ENCODE measurements at regions of chr17 and their contacts with region 1.

Region 1: GRCh38 chr17:81601525-81602120 is 35.3 kb downstream of the NPLOC4 start:
- DNase-seq: peak; percentile 69
- ATAC-seq: peak; percentile 90
- H3K4me3 Mint-ChIP-seq: no peak overlapping the region
- H3K27ac Mint-ChIP-seq: peak overlapping the region; percentile 58
- H3K4me1 Mint-ChIP-seq: peaks cover 10% of the 10 kb centered on the region
- H3K27me3 Mint-ChIP-seq: no peaks in the 10 kb centered on the region

Region 2: DNA sequence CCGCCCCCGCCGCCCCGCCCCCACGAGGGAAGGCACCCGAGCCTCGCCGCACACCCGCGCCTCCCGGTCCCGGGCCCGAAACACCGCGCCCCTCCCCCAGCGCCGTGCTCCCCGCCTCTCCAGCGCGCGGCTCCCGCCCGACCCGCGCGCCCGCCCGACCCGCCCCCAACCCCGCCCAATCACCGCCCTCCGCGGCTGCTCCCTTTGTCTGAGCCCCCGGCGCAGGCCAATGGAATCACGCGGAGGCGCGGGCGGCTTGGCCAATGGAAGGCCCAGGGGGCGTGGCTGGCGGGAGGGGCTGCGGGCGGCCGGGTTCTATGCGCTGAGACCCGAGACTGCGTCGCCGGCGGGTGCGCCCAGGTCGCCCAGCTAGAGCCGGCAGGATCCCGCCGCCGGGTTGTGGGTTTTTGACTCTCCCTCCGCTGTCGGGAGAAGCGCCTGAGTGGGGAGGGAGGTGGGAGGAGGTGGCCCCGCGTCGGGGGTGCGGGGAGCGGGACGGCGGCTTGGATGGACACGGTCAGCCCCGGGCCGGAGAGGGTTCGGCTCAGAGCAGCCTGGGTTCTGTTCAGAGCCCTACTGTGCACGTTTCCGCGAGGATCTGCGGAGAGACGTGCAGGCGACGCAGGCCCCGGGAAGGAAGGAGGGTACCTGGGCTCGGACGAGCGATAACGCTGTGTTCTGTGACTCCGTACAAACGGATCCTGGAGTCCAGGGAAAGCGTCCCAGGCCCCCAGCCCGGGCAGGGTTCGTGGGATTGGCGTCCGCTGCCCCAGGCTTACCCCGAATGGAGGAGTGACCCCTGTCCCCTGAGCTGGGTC is 255.3 kb before region 1 on chr17:
- CTCF ChIA-PET with region 1: no interaction called
- POLR2A ChIA-PET with region 1: no interaction called
- DNase-seq: peak; percentile 95
- ATAC-seq: peak; percentile 86
- H3K4me3 Mint-ChIP-seq: peak overlapping the region; percentile 50
- H3K27ac Mint-ChIP-seq: no peak overlapping the region
- H3K4me1 Mint-ChIP-seq: peaks cover 15% of the 10 kb centered on the region
- H3K27me3 Mint-ChIP-seq: peaks cover 48% of the 10 kb centered on the region

Region 3: GRCh38 chr17:81519284-81519955 is 82.2 kb before region 1 on chr17:
- CTCF ChIA-PET with region 1: interaction called, 25 read pairs
- POLR2A ChIA-PET with region 1: interaction called, 3 read pairs
- DNase-seq: peak; percentile 68
- ATAC-seq: peak; percentile 47
- H3K4me3 Mint-ChIP-seq: peak overlapping the region; percentile 65
- H3K27ac Mint-ChIP-seq: no peak overlapping the region
- H3K4me1 Mint-ChIP-seq: peaks cover 28% of the 10 kb centered on the region
- H3K27me3 Mint-ChIP-seq: peaks cover 15% of the 10 kb centered on the region

Region 4: GRCh38 chr17:81566461-81567126 is 35.0 kb before region 1 on chr17:
- CTCF ChIA-PET with region 1: interaction called, 14 read pairs
- POLR2A ChIA-PET with region 1: no interaction called
- DNase-seq: no peak
- ATAC-seq: no peak
- H3K4me3 Mint-ChIP-seq: no peak overlapping the region
- H3K27ac Mint-ChIP-seq: peak overlapping the region; percentile 66
- H3K4me1 Mint-ChIP-seq: peaks cover 5% of the 10 kb centered on the region
- H3K27me3 Mint-ChIP-seq: no peaks in the 10 kb centered on the region

Region 5: DNA sequence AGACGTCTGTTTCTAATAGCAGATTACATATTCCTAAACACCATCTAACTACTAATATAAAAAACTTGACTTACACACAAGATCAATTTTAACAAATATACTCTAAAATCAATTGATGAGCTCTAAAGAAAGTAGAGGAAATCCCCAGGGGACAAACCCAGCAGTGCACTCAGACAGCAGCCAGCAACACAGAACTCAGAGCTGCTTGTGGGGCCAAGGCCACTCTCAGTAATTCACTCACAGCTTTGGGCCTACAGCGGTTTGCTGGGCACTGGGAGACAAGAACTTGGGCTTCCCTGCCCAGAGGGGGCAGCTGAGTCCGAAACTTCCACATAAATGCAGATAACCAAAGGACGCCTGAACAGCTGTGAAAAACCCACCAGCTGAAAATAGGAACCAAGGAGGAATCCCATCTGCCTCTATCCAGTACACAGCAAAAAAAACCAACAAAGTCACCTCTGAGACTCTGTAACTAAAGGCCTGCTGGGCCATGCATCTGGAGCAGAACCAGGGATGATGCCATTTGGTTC is 13.8 kb after region 1 on chr17:
- CTCF ChIA-PET with region 1: interaction called, 18 read pairs
- POLR2A ChIA-PET with region 1: no interaction called
- DNase-seq: no peak
- ATAC-seq: no peak
- H3K4me3 Mint-ChIP-seq: no peak overlapping the region
- H3K27ac Mint-ChIP-seq: peak overlapping the region; percentile 76
- H3K4me1 Mint-ChIP-seq: peaks cover 20% of the 10 kb centered on the region
- H3K27me3 Mint-ChIP-seq: no peaks in the 10 kb centered on the region

Region 6: GRCh38 chr17:81708739-81709185 is 107.1 kb after region 1 on chr17:
- CTCF ChIA-PET with region 1: no interaction called
- POLR2A ChIA-PET with region 1: no interaction called
- DNase-seq: no peak
- ATAC-seq: no peak
- H3K4me3 Mint-ChIP-seq: no peak overlapping the region
- H3K27ac Mint-ChIP-seq: no peak overlapping the region
- H3K4me1 Mint-ChIP-seq: peaks cover 40% of the 10 kb centered on the region
- H3K27me3 Mint-ChIP-seq: no peaks in the 10 kb centered on the region

Measured in activated CD8-positive, alpha-beta T cell treated with anti-CD3 and anti-CD28 coated beads, Interleukin-2, amount 10 ng/mL, durations not matched to agents 7 days and 5 days (primary cell).